HEK293 (cell line): ENCODE measurements at regions of chr15 and their contacts with region 1.

Region 1: DNA sequence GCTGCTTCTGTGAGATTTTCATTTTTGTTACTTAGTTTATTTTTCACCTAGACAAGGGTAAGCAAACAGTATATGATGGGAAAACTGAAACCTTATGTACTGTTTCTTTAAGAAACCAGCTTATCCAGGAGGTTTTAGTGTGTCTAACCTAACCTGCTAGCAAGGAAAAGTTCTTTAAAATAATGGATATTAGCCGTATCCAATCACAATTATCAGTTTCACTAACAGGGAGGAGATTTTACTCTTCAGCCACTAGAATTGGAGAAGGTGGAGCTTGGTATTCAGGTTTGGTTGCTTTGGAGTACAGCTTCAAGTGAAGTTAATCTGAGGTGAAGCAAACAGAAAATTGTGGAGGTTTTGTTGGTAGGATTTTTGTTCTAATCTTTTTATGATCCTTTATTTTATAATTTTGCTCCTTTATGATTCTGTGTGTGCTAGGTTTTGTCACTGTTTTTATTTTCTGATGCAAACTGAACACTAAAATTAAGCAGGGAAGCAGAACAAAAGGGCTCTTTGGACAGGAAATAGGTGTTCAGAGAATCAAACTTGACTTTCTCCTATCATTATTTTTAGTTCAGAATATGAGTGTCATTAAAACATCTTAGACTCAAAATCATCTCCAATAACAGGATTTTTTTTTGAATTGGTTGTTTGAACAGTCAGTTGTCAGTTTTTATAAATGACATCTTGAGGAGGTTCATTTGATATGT is 13.0 kb downstream of the ZFAND6 start:
- H3K4me3 ChIP-seq: peak overlapping the region; percentile 54
- H3K27ac ChIP-seq: no peak overlapping the region
- H3K4me1 ChIP-seq: peaks cover 53% of the 10 kb centered on the region
- CTCF ChIP-seq: no peak

Region 2: DNA sequence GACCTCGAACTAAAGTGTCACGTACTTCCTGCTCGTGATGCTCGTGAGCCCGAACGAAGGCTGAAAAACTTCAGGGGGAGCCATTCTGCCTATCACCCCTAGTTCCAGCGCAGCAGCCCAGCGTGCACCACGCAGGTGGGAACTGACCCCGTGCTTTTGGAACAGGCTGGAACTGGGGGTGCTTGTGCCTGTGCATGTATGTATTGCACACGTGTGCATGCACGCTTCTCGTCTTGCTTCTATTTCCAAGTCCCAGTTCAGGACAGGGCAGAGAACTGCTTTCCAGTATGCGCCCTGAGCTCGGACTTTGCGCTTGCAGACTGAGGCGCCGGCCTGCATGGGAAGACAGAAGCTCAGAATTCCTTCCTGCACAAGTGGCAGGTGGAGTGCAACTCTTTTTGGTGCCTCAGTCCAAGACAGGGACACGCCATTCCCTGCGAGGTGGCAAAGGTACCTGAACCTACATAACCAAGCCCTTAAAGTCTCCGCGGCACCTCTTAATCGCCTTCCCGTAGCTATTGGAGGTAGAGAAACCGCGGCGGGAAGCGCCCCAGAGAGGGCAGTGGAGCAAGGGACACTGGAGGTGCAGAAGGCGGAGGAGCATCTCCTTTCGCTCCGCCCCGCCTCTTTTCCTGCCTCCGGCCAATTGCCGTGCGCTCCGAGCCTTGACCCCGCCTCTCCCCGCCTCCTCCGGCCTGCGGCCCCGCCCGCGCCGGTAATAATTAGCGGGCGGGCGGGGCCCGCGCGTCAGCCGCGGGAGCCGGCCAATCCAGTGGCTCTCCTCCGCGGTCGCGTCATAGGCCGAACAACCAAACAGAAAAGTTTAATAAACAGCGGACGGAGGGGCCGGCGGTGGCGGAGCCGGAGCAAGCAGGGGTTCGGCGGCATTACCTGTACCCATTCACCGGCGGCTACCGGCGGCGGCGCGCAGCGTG is 13.3 kb before region 1 on chr15 and contains the start of gene ZFAND6:
- CTCF ChIA-PET with region 1: interaction called, 4 read pairs
- POLR2A ChIA-PET with region 1: interaction called, 18 read pairs
- H3K4me3 ChIP-seq: peak within 1 kb of the TSS; percentile 80
- H3K27ac ChIP-seq: peak within 1 kb of the TSS; percentile 98
- H3K4me1 ChIP-seq: peaks cover 17% of the 10 kb centered on the region
- CTCF ChIP-seq: peak; percentile 15; the same call in 1 of the 2 replicates

Region 3: DNA sequence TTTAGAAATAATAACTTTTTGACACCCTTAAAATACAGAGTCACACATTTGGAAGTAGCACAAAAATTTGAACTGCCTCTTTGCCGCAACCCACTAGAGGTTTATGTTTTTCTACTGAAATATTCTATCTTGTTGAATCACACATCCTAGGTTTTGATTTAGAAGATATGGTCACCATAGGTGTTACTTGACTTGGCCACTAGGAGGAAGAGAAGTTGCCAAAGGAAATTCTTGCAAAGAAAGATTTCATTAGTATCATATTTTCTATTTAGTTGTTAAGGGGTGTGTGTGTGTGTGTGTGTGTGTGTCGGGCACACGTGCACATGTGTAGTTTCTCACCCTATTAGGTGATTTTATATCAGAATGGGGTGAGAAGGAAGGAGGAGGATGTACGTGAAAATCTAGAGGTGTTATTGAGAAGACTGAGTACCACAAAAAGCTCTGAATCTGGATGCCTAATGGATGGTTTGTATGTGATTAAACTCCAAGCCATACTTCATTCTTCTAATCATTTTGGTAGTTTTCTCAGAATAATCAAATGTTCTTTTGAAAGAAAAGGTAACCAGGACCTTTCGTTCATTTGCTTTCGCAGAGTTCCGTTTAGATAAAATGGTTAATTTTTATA is 18.6 kb after region 1 on chr15:
- CTCF ChIA-PET with region 1: interaction called, 48 read pairs
- POLR2A ChIA-PET with region 1: no interaction called
- H3K4me3 ChIP-seq: no peak overlapping the region
- H3K27ac ChIP-seq: no peak overlapping the region
- H3K4me1 ChIP-seq: peaks cover 27% of the 10 kb centered on the region
- CTCF ChIP-seq: no peak

Region 4: DNA sequence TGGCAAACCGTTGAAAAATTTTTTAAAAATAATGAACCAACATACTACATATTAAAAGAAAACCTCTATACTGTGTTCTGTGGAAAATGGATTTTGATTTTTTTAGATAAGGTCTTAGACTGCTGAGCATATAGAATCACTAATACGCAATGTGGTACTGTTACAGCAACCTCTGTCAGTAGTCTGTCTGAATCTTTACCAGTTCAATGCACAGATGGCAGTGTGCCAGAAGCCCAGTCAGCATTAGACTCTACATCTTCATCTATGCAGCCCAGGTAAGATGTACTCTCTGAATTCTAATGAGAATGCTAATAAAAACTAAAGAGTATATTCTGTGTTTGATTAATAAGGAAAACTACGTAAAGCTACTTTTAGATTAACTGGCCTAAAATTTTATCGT is 49.1 kb after region 1 on chr15:
- CTCF ChIA-PET with region 1: no interaction called
- POLR2A ChIA-PET with region 1: no interaction called
- H3K4me3 ChIP-seq: no peak overlapping the region
- H3K27ac ChIP-seq: no peak overlapping the region
- H3K4me1 ChIP-seq: peaks cover 17% of the 10 kb centered on the region
- CTCF ChIP-seq: no peak